Ovary (tissue), 10 donors: ENCODE measurements at regions of chr5 and their contacts with region 1.

Region 1: DNA sequence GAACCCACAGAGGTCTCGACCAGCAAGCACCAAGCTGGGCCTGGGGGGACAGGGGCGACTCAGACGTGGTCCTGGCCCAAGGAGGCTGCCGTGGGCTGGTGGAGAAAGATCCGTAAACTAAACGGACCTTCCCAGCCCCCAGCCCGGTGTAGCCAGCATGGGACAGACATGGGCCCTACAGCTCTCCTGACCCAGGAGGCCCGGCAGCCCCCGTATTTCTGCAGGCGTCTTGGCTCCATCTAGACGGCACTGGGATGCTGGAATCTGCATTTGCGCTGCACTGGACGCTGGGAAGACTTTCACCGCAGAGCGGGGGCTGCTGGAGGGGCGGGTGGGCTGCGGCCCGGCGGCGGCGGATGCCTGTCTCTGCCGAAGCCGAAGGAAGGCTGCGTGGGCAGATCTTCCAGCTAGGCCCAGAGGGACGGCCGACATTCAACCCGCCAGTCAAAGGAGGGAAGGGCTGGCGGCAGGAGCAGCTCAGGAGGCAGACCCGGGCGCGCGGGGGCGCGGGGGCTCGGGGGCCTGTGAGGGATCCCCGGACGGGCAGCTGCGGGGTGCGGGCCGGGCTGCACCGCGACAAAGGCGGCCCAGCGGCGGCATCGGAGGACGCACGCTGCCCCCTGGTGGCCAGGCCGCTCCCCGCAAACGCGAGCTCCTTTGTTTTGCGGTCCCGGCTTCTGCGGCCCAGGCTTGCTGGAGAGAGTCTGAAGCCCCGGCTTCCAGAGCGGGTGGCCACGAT is 266.2 kb downstream of the NSG2 start:
- DNase-seq: peak; percentile 61 to 86 (median 76)
- H3K4me3 ChIP-seq: peak overlapping the region; percentile 36
- H3K27ac ChIP-seq: no peak overlapping the region
- H3K4me1 ChIP-seq: no peaks in the 10 kb centered on the region
- H3K27me3 ChIP-seq: no peaks in the 10 kb centered on the region
- CTCF ChIP-seq: peak; percentile 62 to 80 (median 78)
- EP300 ChIP-seq: no peak
- POLR2A ChIP-seq: no peak

Region 2: DNA sequence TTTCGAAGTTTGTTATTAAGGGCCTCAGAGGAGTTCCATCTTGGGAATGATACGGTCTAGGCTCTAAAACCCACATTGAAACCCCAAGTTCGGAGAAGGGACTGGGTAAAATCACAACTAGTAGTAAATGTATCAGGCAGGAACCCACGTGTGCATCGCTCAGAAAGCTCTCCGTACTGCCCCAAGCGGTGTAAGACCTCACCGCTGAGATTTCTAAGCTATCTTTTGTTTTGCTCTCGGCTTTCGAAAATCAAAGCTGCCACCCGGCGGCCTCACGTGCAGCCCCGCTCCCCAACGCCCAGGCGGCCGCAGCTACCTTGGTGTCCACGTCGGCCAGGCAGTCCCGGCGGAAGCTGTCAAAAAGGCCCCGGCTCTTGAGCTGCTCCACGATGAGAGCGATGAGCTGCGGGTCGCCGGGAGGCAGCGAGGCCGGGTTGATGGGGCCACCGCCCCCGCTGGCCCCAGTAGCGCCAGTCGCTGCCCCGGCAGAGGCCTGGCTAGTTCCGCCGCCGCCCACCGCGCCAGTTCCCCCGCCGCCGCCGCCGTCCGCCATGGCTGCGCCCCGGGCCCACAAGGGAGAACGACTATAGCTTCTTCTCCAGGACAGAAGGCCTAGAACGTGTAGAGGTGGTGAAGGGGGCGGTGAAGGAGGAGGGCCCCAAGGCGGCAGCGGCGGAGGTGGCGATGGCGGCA is 695.7 kb before region 1 on chr5:
- intact Hi-C with region 1: loop called in 2 of 4 experiments (anchors 5 to 10 kb)
- DNase-seq: peak; percentile 46 to 72 (median 60)
- H3K4me3 ChIP-seq: peak overlapping the region; percentile 97
- H3K27ac ChIP-seq: peak overlapping the region; percentile 80 to 86
- H3K4me1 ChIP-seq: peaks cover 9% of the 10 kb centered on the region
- H3K27me3 ChIP-seq: no peaks in the 10 kb centered on the region
- CTCF ChIP-seq: peak; percentile 49 to 62 (median 51)
- EP300 ChIP-seq: no peak
- POLR2A ChIP-seq: no peak

Region 3: GRCh38 chr5:173623296-173623771 is 688.4 kb before region 1 on chr5:
- intact Hi-C with region 1: loop called in 2 of 4 experiments (anchors 5 to 10 kb)
- DNase-seq: no peak
- H3K4me3 ChIP-seq: no peak overlapping the region
- H3K27ac ChIP-seq: no peak overlapping the region
- H3K4me1 ChIP-seq: no peaks in the 10 kb centered on the region
- H3K27me3 ChIP-seq: no peaks in the 10 kb centered on the region
- CTCF ChIP-seq: no peak
- EP300 ChIP-seq: no peak
- POLR2A ChIP-seq: no peak

Region 4: GRCh38 chr5:174056064-174056847 is 255.4 kb before region 1 on chr5:
- intact Hi-C with region 1: loop called in 1 of 4 experiments (anchors 10 kb)
- DNase-seq: no peak
- H3K4me3 ChIP-seq: no peak overlapping the region
- H3K27ac ChIP-seq: no peak overlapping the region
- H3K4me1 ChIP-seq: no peaks in the 10 kb centered on the region
- H3K27me3 ChIP-seq: no peaks in the 10 kb centered on the region
- CTCF ChIP-seq: no peak
- EP300 ChIP-seq: no peak
- POLR2A ChIP-seq: no peak

Region 5: DNA sequence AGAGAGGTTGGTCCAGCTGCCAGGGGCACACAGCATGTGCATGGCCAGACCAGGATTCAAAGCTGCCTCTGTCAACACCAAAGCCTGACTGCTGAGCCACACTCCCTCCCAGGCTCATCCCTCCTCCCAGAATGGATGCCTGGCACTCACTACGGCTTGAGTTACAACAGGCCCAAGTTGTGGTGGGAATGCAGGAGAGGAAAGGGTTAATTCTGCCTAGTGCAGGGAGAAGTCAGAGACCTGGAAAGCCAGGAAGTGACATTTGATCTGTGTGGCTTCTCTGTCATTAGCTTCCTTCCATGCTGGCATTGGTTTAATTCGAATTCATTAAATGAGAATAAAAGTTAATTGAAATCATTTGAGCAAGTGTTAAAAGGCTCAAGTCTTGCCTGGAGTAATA is 116.2 kb before region 1 on chr5:
- intact Hi-C with region 1: no loop called
- DNase-seq: no peak
- H3K4me3 ChIP-seq: no peak overlapping the region
- H3K27ac ChIP-seq: no peak overlapping the region
- H3K4me1 ChIP-seq: peaks cover 4% of the 10 kb centered on the region
- H3K27me3 ChIP-seq: no peaks in the 10 kb centered on the region
- CTCF ChIP-seq: no peak
- EP300 ChIP-seq: no peak
- POLR2A ChIP-seq: no peak